ENCODE measurements at regions of chr5 and their contacts with region 1.

Region 1: DNA sequence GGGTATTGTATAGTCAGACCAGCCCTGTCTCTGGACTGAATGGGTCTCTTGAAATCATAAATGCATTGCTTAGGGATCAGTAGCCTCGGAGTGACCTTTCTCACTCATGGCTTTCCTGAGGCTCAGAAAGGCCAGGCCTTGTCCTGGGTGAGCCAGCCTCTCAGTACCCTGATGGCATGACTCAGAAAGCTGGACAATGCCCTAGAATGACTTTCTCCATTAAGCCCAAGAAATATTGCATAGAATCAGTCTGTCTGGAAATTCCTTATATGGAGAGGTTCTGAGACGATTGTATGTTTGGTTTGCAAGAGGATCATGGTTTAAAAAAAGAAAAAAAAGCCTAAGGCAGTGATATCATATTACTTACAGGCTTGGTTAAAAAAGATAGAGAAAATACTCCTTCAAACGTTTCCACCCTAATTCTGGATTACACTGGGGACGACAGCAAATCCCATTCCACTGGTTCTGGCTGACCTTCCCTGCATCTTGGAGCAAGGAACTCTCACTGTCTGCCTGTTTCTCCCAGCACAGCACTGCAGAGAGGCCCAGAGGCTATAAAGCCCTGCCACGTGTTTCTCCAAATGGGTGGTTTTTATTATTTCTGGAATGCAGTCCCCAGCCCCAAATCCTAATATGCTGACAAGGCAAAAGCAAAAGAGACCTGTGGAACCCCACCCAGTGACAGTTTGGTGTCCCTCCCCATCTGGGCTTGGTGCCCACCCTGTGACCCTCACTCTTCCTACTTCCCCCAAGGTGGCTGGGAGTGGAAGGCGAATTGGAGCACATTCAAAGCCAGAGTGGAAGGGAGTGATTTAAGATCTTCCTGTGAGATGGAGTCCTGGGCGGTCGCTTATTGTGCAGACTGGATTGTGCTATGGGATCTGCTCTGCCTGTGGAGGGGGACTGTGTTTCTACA is 34.4 kb downstream of the MAP1B start:
- DNase-seq: no peak

Region 2: DNA sequence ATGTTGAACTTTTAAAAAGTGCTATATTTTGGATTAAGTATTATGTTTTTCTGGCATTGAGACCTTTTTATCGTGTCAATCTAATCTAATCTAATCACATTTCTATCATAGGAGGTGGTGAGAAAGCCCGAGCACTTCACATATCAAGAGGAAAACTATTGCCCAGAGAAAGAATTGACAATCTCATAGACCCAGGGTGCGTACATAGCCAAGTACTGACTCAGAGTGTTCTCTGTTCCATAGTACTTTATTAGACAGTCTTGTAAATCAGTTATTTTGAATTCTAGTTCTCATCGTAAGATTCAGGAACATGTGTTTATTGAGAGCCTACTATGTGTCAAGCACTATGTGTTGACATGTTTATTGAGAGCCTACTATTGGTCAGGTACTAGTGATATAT is 545.5 kb before region 1 on chr5:
- intact Hi-C with region 1: no loop called
- DNase-seq: no peak

Region 3: DNA sequence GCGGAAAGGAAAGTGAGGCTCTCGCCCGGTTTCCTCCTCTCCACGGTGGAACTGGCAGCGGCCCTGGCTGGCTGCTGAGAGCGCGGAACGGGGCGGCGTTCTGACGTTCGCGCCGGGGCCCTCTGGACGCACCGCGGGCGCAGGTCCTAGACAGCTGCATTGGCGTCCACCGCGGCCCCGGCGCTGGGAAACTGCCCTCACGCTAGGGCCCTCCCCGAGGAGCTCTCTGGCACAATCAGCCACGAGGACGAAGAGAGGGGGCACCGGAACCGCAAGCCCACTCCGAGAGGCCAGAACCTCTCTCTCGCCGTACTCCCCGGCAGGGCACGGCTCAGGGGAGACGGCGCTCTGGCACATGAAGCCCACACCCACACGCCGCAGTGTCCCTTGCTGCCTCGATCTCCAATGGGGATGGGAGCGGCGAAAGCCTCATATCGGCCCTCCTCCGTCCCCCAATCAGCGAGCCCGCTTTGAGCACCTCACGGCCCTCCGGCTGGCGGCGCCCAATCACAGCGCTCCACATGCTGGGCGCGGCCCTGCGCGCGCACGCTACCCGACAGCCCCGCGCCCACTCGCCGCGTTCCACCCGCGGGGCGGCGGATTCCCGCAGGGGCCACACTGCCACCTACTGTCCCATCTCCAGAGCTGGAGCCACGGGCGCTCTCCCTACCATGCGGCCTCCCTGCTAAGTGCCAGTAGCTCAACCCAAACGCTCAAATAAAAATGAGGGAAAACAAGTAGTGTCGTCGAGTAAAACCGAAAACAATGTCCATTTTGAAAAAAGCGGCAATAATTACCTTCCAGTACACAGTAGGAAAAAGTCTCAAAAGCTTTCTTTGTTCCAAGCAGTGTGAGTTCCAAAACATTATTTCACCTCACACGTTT is 166.5 kb after region 1 on chr5:
- intact Hi-C with region 1: loop called in 1 of 2 experiments (anchors 10 kb)
- DNase-seq: peak; percentile 99

Measured in posterior vena cava (tissue), 2 donors.